ENCODE measurements at regions of chr1 and their contacts with region 1.

Region 1: DNA sequence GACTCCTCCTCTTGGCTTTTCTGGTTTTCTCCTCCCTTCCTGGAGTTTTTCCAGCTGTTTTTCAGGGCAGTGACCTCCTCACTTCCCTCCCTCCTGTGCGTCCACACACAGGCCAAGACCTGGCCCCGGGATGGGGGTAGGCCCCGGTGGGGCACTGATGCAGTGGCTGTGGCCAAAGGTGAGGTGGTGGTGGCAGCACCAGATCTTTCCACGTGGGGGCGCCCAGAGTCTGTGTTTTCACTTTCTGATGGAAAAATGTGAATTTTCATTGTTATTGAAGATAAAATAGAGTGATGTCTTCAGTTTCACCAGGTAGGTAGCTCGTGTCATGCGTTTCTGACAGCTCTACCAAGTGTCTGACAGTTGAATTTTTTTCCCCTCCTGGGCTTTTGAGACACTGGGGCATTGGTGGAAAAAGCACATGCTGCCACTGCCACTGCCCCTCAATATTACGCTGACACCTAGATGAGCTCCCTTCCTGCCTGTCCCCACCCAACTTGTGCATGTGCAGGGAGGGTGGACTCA is 39.9 kb upstream of the MAGOH start:
- DNase-seq: no peak
- H3K4me3 ChIP-seq: no peak overlapping the region
- CTCF ChIP-seq: peak; percentile 81

Region 2: DNA sequence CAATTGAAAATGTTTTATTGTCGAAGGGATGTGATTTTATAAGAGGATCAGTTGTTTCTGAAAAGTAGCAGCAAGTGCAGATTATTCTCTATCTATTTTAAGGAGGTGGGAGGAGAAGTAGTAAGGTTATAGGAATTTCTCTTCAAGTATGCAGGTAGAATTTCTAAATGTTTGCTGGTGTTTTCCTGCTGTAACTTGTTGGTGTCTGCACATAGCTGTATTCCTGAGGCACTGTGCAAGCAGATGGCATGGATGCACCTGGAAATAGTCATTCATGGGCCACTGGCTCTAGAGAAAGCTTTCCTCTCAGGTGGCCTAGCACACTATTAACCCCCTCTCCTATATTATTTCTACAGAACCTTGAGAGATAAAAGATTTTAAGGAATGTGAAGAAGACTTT is 246.5 kb before region 1 on chr1:
- CTCF ChIA-PET with region 1: no interaction called
- POLR2A ChIA-PET with region 1: no interaction called
- DNase-seq: no peak
- H3K4me3 ChIP-seq: no peak overlapping the region
- CTCF ChIP-seq: no peak

Region 3: DNA sequence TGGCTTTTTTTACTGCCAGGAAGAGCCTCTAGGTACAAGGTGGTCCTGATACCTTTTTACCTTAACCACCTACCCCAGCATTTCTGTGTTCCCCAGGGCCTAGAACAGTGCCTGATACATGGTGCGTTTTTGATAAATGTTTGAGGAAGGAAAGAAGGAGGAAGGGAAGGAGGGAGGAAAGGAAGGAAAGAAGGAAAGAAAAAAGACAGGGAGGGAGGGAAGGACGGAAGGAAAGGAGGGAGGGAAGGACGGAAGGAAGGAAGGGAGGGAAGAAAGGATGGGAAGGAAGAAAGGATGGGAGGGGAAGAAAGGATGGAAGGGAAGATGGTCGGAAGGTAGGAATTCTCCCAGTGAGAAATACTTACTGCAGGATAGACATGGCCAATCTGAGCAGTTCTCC is 27.9 kb before region 1 on chr1:
- CTCF ChIA-PET with region 1: interaction called, 178 read pairs
- POLR2A ChIA-PET with region 1: no interaction called
- DNase-seq: no peak
- H3K4me3 ChIP-seq: no peak overlapping the region
- CTCF ChIP-seq: no peak

Region 4: DNA sequence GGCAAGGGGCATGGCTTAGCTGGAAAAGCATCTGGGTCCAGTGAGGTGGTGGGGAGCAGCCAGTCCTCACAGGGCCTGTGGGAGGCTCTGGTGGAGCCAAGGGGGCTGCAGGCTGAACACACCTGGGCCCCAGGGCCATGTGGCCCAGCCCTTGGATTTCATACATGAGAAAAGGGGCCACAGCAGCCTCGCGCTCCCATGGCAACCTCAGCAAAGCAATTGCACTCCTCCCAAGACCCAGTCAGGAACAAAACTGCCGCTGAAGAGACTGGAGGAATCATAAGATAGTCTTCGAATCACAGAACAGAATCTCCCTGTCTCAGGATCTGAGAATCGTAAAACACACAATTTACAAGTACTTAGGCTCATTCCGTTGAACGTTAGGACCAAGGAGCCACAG is 25.0 kb after region 1 on chr1:
- CTCF ChIA-PET with region 1: interaction called, 12 read pairs
- POLR2A ChIA-PET with region 1: no interaction called
- DNase-seq: no peak
- H3K4me3 ChIP-seq: no peak overlapping the region
- CTCF ChIP-seq: no peak

Region 5: DNA sequence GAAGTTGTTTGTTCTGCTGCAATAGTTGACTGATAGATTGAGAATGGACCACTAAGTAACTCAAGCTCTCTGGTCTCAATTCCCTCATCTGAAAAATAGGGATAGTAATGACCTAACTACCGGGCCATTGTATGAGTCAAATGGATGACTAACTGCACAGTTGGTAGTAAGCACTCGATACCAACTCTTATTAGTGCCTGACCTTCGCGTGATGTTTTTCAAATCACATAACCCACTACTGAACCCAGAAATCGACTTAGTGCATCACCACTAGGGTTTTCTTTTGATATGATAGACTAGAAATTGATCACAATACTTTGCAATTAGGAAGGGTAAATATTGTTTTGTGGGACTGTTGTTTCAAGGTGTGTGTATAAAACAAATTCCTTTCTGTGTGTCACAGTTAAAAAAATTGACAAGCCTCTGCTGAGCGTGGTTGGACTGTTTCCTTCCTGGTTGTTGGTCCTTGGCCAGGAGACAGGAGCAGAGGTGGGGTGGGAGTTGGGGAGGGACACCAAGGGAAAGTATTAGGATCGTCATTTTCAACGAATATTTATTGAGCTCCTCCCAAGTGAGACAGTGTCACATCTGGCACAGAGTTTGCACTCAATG is 103.6 kb after region 1 on chr1:
- CTCF ChIA-PET with region 1: interaction called, 574 read pairs
- POLR2A ChIA-PET with region 1: no interaction called
- DNase-seq: no peak
- H3K4me3 ChIP-seq: no peak overlapping the region
- CTCF ChIP-seq: no peak

Region 6: GRCh38 chr1:53450225-53450624 is 172.0 kb after region 1 on chr1:
- CTCF ChIA-PET with region 1: interaction called, 15 read pairs
- POLR2A ChIA-PET with region 1: no interaction called
- DNase-seq: no peak
- H3K4me3 ChIP-seq: no peak overlapping the region
- CTCF ChIP-seq: no peak

Region 7: DNA sequence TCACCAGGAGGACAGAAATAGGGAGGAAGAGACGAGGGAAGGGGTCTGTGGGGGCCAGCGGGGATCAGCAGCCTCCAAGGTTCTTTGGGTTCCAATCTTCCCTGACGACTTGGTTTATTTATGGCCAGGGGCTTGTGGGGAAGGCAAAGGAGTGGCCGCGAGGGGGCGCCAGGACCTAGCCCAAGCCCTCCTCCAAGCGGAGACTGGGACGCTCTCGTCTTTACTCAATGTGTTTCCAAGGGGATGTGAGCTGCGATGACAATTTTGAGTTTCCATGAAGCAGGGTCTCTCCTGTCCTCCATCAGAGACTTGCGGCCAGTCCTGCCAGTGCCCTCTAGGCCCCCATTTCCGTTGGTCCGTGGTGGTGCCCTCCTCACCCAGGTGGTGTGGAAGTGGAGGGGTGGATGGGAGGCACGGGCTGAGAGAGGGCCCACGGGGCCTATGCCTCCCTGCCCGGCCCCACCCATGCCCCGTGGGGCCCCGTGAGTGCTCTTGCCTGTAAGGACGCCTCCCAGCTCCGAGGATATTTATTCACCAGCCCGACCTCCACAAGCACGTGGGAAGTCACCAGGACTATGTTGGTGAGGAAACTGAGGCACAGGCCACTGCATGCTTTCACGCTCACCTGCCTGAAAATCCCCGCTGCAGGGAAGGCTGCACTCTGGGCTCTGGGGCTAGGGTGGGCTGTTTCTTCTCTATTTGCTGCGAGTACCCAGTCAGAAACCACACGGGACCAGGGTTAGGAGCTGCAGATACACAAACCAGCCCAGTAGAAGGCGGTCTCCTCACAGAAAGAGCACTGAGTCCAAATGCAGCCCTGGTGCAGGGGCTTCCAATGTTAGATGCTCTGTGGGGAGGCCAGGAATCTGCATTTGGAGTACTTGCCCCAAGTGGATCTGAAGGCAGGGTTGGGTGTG is 207.5 kb after region 1 on chr1:
- CTCF ChIA-PET with region 1: interaction called, 19 read pairs
- POLR2A ChIA-PET with region 1: no interaction called
- DNase-seq: no peak
- H3K4me3 ChIP-seq: no peak overlapping the region; the same call in 1 of the 2 replicates
- CTCF ChIP-seq: peak; percentile 93

Region 8: DNA sequence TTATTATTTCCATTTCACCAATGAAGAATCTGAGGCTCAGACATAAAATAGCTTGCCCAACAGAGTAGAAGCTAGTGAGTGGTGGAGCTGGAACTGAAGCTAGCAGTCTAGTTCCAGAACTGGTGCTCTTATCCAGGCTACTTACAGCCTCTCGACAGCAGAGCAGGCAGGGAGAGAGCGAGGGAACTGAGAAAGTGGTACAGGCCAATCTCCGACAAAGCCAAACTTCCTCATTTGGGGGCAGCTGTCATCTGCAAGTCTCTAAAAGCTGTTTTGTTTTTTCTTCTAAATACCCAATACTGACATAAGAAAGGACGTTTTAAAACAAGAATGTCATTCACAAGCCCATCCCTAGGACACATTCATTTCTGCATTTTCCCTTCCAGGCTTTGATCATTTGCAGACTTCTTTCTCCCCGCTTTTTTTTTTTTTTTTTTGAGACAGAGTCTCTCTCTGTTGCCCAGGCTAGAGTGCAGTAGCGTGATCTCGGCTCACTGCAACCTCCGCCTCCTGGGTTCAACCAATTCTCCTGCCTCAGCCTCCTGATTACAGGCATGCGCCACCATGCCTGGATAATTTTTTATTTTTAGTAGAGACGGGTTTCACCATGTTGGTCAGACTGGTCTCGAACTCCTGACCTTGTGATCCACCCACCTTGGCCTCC is 591.3 kb after region 1 on chr1:
- CTCF ChIA-PET with region 1: no interaction called
- POLR2A ChIA-PET with region 1: no interaction called
- DNase-seq: no peak
- H3K4me3 ChIP-seq: no peak overlapping the region
- CTCF ChIP-seq: no peak

Measured in AG04449 (cell line).